T-cell (primary cell): ENCODE measurements at regions of chr11 and their contacts with region 1.

Region 1: DNA sequence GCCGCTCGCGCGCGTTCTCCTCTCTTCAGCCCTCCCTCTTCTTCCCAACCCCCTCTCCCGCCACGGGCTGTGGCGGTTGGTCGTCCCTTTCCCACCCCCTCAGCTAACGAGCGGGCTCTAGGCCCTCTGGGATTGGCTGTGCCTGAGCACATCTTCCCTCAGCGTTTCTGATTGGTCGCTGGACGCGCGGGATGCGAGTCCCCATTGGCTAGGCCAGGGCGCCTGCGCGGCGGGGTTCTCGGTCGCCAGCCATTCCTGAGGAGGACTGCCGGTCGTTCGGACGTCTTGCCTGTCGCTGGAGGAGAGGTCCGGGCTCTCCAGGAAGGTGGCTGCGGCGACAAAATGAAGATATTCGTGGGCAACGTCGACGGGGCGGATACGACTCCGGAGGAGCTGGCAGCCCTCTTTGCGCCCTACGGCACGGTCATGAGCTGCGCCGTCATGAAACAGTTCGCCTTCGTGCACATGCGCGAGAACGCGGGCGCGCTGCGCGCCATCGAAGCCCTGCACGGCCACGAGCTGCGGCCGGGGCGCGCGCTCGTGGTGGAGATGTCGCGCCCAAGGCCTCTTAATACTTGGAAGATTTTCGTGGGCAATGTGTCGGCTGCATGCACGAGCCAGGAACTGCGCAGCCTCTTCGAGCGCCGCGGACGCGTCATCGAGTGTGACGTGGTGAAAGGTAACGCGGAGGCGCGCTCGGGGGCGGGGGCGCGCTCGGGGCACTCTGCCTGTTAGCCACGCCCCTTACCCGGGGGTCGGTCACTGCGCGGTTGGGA is at the start of gene RBM14:
- DNase-seq: peak; percentile 95 to 99 (median 98)
- ATAC-seq: peak; percentile 85 to 94 (median 93)
- H3K4me3 ChIP-seq: peak within 1 kb of the TSS; percentile 93 to 97
- H3K4me3 Mint-ChIP-seq: peak within 1 kb of the TSS; percentile 97 to 99 (median 98)
- H3K27ac ChIP-seq: peak within 1 kb of the TSS; percentile 97
- H3K27ac Mint-ChIP-seq: peak within 1 kb of the TSS; percentile 98
- H3K4me1 ChIP-seq: peaks cover 29 to 49% of the 10 kb centered on the region in 2 experiments
- H3K4me1 Mint-ChIP-seq: peaks cover 44 to 50% (median 49%) of the 10 kb centered on the region in 3 donors
- H3K27me3 ChIP-seq: no peaks in the 10 kb centered on the region
- H3K27me3 Mint-ChIP-seq: no peaks in the 10 kb centered on the region
- total RNA-seq, gene RBM14: 176 to 382 (median 191) TPM

Region 2: GRCh38 chr11:66592457-66593302 is 23.9 kb before region 1 on chr11 and contains the starts of genes CCDC87 and CCS:
- CTCF ChIA-PET with region 1: interaction called, 3 to 10 read pairs
- POLR2A ChIA-PET with region 1: interaction called, 12 to 15 read pairs
- DNase-seq: peak; percentile 95 to 100 (median 98)
- ATAC-seq: peak; percentile 96 to 99 (median 98)
- H3K4me3 ChIP-seq: peak within 1 kb of the TSS; percentile 68 to 79
- H3K4me3 Mint-ChIP-seq: peak within 1 kb of the TSS; percentile 92 to 100 (median 100)
- H3K27ac ChIP-seq: peak within 1 kb of the TSS; percentile 77
- H3K27ac Mint-ChIP-seq: peak within 1 kb of the TSS; percentile 99 to 100
- H3K4me1 ChIP-seq: peaks cover 5 to 37% of the 10 kb centered on the region in 2 experiments
- H3K4me1 Mint-ChIP-seq: peaks cover 34 to 40% (median 35%) of the 10 kb centered on the region in 3 donors
- H3K27me3 ChIP-seq: peaks cover 0 to 7% of the 10 kb centered on the region in 2 experiments
- H3K27me3 Mint-ChIP-seq: no peaks in the 10 kb centered on the region
- total RNA-seq, gene CCDC87: 0.10 to 0.65 (median 0.32) TPM
- total RNA-seq, gene CCS: 32.3 to 69.5 (median 58.3) TPM

Region 3: DNA sequence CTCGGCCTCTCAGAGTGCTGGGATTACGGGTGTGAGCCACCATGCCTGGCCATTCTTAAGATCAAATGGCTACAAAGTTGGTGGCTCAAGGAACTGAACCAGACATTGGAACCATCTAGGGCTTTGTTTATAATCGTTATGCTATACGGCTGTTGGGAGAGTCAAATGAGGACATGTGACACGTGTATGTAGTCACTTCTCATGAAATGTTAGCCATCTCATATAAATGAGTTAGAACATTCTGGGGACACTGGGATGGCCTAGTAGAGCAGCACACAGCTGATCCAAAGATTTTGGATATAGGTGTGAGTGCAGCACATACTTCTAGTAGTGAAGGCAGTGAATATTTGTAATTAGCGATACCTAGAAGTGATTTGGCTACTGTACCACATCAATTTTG is 15.3 kb after region 1 on chr11:
- CTCF ChIA-PET with region 1: interaction called in 1 of 2 experiments, 7 read pairs
- POLR2A ChIA-PET with region 1: interaction called, 14 to 165 read pairs
- DNase-seq: no peak
- ATAC-seq: no peak
- H3K4me3 ChIP-seq: no peak overlapping the region
- H3K4me3 Mint-ChIP-seq: no peak overlapping the region
- H3K27ac ChIP-seq: no peak overlapping the region
- H3K27ac Mint-ChIP-seq: no peak overlapping the region
- H3K4me1 ChIP-seq: peaks cover 2 to 32% of the 10 kb centered on the region in 2 experiments
- H3K4me1 Mint-ChIP-seq: peaks cover 51 to 60% (median 53%) of the 10 kb centered on the region in 3 donors
- H3K27me3 ChIP-seq: no peaks in the 10 kb centered on the region
- H3K27me3 Mint-ChIP-seq: no peaks in the 10 kb centered on the region

Region 4: GRCh38 chr11:66646828-66647227 is 30.3 kb after region 1 on chr11:
- CTCF ChIA-PET with region 1: interaction called in 1 of 2 experiments, 3 read pairs
- POLR2A ChIA-PET with region 1: interaction called, 7 to 14 read pairs
- DNase-seq: no peak
- ATAC-seq: no peak
- H3K4me3 ChIP-seq: no peak overlapping the region
- H3K4me3 Mint-ChIP-seq: peak overlapping the region in 1 of 3 donors; percentile 98
- H3K27ac ChIP-seq: no peak overlapping the region
- H3K27ac Mint-ChIP-seq: no peak overlapping the region
- H3K4me1 ChIP-seq: peaks cover 31 to 51% of the 10 kb centered on the region in 2 experiments
- H3K4me1 Mint-ChIP-seq: peaks cover 82 to 86% (median 83%) of the 10 kb centered on the region in 3 donors
- H3K27me3 ChIP-seq: no peaks in the 10 kb centered on the region
- H3K27me3 Mint-ChIP-seq: no peaks in the 10 kb centered on the region